PC-9 (cell line): ENCODE measurements at regions of chr14 and their contacts with region 1.

Region 1: DNA sequence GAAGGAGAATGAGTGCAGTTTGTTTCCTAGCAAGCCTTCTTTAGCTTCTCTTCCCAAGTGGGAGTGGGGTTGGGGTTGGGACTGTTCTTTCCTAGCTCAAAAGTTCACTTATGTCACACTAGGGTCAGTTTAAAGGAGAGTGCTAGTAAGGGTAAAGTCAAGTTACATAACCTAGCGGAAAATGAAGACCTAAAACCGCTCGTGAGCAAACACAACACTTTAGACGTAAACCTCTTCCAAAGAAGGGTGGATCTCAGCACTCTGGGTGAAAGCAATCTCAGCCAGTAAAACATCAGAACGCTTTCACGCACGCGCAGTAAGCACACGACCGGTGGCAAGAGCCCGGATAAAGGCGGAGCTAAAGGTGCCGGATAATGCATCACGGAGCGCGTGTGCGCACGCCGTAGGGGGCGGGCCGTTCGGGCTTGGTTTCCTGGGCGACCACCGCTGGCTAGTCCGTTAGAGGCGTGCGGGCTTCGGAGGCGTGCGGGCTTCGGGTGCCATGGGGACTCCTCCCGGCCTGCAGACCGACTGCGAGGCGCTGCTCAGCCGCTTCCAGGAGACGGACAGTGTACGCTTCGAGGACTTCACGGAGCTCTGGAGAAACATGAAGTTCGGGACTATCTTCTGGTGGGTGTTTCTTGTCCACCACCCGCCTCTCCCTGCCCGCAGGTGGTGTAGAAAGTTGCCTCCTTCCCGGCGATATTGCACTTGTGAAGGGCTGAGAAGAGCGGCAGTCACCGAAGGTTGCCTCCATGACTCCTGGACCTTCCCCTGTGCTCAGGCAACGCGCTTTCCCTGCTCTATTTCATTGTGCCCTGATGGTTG is at the start of gene SNAPC1:
- DNase-seq: peak; percentile 97
- H3K4me3 ChIP-seq: peak within 1 kb of the TSS; percentile 72
- H3K27ac ChIP-seq: peak within 1 kb of the TSS; percentile 72
- H3K4me1 ChIP-seq: peaks cover 40% of the 10 kb centered on the region
- H3K27me3 ChIP-seq: no peaks in the 10 kb centered on the region
- CTCF ChIP-seq: no peak
- total RNA-seq, gene SNAPC1: 17.9 and 18.0 TPM in 2 replicates

Region 2: DNA sequence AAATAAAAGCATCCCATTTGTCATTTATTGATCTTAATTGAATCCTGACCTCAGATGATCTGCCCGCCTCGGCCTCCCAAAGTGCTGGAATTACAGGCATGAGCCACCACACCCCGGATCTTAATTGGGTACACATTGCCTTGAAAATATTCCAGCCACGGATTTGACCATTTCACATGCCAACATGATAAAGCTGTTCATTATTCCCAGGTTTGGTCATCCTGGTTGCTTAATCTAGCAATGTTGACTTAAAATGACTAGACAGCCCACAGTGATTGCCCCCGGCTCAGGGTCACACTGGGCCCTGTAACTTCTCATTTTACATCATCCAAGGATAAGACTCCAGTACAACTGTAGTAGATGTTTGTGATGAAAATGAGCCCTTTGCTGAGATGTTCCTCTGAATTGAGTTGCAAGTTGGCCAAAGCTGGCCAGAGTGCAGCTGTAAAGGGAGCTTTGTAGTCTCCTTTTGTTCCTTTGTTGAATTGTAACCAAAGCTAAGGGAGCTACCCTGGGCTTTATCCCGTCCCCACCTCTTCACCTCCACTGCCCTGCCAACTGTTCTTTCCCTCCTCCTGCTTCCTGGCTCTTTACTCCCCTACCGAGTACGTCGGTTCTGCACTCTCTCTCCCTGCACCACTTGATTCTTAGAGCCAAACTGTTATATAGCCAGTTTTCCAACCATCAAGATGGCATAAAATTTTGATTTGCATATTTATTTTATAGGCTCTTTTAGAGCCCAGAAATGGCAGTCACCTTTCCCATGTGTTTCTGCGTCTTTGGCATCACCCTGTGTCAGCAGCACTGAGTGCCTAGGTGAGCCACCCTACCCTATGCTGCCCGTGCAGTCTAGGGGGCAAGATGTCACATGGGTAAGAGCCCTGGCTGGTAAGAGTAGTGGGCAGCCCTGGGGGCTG is 208.2 kb before region 1 on chr14:
- CTCF ChIA-PET with region 1: no interaction called
- POLR2A ChIA-PET with region 1: interaction called, 11 read pairs
- intact Hi-C with region 1: no loop called
- DNase-seq: peak; percentile 71 to 99
- H3K4me3 ChIP-seq: peak overlapping the region; percentile 13; the same call in 1 of the 2 replicates
- H3K27ac ChIP-seq: peak overlapping the region; percentile 97
- H3K4me1 ChIP-seq: peaks cover 55% of the 10 kb centered on the region
- H3K27me3 ChIP-seq: no peaks in the 10 kb centered on the region
- CTCF ChIP-seq: no peak

Region 3: GRCh38 chr14:61662437-61663311 is 99.5 kb before region 1 on chr14:
- CTCF ChIA-PET with region 1: no interaction called
- POLR2A ChIA-PET with region 1: interaction called, 12 read pairs
- intact Hi-C with region 1: no loop called
- DNase-seq: peak; percentile 69 to 90
- H3K4me3 ChIP-seq: peak overlapping the region; percentile 3; the same call in 1 of the 2 replicates
- H3K27ac ChIP-seq: peak overlapping the region; percentile 91
- H3K4me1 ChIP-seq: peaks cover 68% of the 10 kb centered on the region
- H3K27me3 ChIP-seq: no peaks in the 10 kb centered on the region
- CTCF ChIP-seq: no peak

Region 4: DNA sequence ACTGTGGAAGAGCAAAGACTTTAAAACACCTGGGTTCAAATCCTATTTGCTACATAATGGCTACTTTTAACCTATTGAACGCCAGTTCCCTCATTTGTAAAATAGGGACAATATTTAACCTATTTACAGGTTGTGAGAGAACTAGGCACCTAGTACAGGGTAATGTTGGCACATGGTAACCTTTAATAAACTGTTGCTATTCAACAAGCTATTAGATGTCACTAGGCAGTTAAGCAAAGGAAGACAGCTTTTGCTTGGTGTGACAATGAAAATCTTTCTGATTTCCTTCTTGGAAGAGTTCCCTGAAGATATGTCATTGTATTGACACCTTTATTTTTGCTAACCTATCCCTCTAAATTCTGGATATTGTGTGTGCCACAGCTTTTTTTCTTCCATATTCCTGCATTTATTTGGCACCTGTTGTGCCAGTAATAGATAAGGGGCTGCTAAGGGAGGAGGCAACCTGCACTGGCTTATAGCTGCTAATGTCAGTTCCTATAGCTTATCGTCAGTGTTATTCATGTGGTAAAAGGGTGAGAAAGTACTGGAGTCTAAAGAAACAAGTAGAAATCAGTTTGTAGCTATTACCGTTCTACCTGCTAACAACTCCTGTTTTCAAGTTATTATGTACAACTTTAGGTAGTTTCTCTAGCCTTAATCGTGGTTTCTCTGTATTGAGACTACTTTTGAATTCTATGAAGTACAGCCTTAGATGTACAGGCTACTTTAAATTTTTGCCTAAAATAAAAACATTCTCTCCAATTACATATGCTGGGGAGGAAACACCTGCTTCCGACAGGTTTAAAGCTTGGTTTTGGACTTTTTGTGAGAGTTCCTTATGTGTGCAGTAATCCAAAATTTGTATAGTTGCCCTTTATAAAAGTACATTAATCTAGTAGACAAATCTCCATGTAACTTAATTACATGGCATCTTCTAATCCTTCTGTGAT is 42.6 kb before region 1 on chr14:
- CTCF ChIA-PET with region 1: no interaction called
- POLR2A ChIA-PET with region 1: interaction called, 29 read pairs
- intact Hi-C with region 1: no loop called
- DNase-seq: no peak
- H3K4me3 ChIP-seq: no peak overlapping the region
- H3K27ac ChIP-seq: peak overlapping the region; percentile 40
- H3K4me1 ChIP-seq: peaks cover 57% of the 10 kb centered on the region
- H3K27me3 ChIP-seq: no peaks in the 10 kb centered on the region
- CTCF ChIP-seq: no peak

Region 5: GRCh38 chr14:61780125-61780524 is 18.0 kb after region 1 on chr14:
- CTCF ChIA-PET with region 1: interaction called, 10 read pairs
- POLR2A ChIA-PET with region 1: no interaction called
- intact Hi-C with region 1: no loop called
- DNase-seq: no peak
- H3K4me3 ChIP-seq: no peak overlapping the region
- H3K27ac ChIP-seq: no peak overlapping the region
- H3K4me1 ChIP-seq: no peaks in the 10 kb centered on the region
- H3K27me3 ChIP-seq: no peaks in the 10 kb centered on the region
- CTCF ChIP-seq: no peak

Region 6: GRCh38 chr14:61911574-61911973 is 149.4 kb after region 1 on chr14:
- CTCF ChIA-PET with region 1: no interaction called
- POLR2A ChIA-PET with region 1: no interaction called
- intact Hi-C with region 1: no loop called
- DNase-seq: no peak
- H3K4me3 ChIP-seq: no peak overlapping the region
- H3K27ac ChIP-seq: no peak overlapping the region
- H3K4me1 ChIP-seq: no peaks in the 10 kb centered on the region
- H3K27me3 ChIP-seq: no peaks in the 10 kb centered on the region
- CTCF ChIP-seq: no peak

Region 7: DNA sequence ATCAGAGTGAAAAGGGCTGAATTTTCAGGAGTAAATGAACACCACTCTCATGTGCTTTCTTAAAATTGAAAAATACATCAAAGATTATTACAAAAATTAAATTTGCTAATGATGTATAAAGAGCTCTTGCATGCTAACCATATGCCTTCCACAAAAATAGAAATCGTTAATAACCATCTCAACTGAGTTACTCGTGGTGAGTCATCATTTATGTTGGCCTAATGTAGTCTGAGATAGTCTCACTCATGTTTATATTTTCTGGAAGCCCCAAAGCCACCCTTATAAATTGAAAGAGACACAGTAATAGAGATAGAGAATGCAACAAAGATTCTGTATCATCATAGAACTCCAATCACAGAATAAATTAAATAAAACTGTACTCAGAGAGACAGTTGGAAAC is 1151.9 kb after region 1 on chr14:
- CTCF ChIA-PET with region 1: interaction called, 19 read pairs
- POLR2A ChIA-PET with region 1: no interaction called
- intact Hi-C with region 1: no loop called
- DNase-seq: no peak
- H3K4me3 ChIP-seq: no peak overlapping the region
- H3K27ac ChIP-seq: no peak overlapping the region
- H3K4me1 ChIP-seq: no peaks in the 10 kb centered on the region
- H3K27me3 ChIP-seq: no peaks in the 10 kb centered on the region
- CTCF ChIP-seq: no peak